GM10248 (cell line): ENCODE measurements at regions of chr9 and their contacts with region 1.

Region 1: DNA sequence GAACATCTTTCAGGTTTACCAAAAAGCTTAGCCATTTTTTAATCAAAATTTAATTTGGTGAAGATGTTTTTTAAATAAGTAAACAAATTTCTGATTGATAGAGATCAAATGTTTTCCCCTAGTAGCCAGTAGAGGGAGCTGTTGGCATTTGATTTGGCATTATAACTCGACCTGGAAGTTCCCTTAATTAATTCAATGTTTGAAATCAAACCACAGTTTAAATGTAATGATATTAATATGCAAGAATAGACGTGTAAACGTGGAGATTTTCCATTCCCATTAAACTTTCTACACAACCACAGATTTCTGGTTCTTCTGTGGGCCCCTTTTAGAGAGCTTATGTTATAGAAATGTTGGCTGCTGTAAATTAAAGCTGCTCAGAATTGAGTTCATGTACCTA is 148.1 kb upstream of the MPDZ start:
- DNase-seq: peak; percentile 36
- CTCF ChIP-seq: peak; percentile 53

Region 2: GRCh38 chr9:13267743-13268142 is 159.8 kb before region 1 on chr9:
- CTCF ChIA-PET with region 1: no interaction called
- POLR2A ChIA-PET with region 1: no interaction called
- DNase-seq: no peak
- CTCF ChIP-seq: no peak

Region 3: DNA sequence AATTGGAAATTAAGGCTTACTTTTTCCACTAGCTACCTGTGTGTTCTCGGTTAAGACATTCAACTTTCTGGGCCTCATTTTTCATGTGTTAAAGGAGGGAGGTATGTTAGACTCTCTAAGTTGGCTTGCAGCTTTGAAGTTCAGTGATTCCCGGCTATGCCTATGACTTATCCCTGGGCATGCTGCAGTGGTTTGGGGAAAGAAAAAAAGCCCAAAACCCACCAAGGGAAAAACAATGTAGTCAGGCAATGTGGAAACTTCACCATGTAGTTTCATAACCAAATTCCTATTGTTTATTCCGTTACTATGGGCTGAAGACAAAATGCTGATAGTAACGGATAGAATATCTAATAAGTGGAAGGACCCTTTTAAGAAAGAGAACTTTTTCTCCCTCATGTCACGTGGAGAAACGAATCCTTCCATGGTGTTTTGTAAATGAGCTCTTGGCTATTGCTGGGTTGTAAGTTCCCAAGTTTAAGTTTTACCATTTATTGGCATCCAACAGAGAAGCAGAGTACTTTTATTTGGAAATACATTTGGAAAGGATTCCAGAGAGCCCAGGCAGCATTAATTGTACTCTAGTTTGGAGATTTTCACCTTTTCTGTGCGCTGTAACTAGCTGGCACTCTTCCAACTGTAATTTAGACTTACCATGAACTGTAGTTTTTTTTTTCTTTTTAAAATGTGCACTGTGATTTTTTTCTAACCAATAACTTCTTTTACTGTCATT is 63.2 kb before region 1 on chr9:
- CTCF ChIA-PET with region 1: no interaction called
- POLR2A ChIA-PET with region 1: no interaction called
- DNase-seq: no peak
- CTCF ChIP-seq: no peak

Region 4: DNA sequence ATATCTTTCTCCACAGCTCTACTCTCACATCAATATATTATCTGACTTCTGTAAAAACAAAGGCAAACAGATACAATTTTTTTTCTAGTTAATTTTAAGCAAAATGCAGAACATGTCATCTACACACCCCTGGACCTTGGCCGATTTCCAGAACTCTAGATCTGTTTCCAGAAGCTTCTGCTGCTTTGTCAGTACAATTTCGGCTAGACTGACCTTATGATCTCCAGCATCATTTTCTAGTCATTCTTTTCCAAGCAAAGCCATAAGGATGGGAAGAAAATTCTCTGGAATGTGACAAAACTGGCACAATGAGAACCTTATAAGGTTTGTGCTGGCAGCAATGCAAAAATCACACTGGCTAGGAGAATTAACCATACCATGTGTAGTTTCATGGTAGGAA is 15.3 kb before region 1 on chr9:
- CTCF ChIA-PET with region 1: interaction called, 21 read pairs
- POLR2A ChIA-PET with region 1: no interaction called
- DNase-seq: no peak
- CTCF ChIP-seq: no peak

Region 5: GRCh38 chr9:13437866-13438265 is 10.3 kb after region 1 on chr9:
- CTCF ChIA-PET with region 1: interaction called, 45 read pairs
- POLR2A ChIA-PET with region 1: no interaction called
- DNase-seq: no peak
- CTCF ChIP-seq: no peak

Region 6: GRCh38 chr9:13443346-13444244 is 16.0 kb after region 1 on chr9:
- CTCF ChIA-PET with region 1: interaction called, 45 read pairs
- POLR2A ChIA-PET with region 1: no interaction called
- DNase-seq: no peak
- CTCF ChIP-seq: no peak

Region 7: GRCh38 chr9:14353222-14354056 is 925.9 kb after region 1 on chr9:
- CTCF ChIA-PET with region 1: interaction called, 127 read pairs
- POLR2A ChIA-PET with region 1: no interaction called
- DNase-seq: peak; percentile 78
- CTCF ChIP-seq: peak; percentile 92

Region 8: GRCh38 chr9:14428781-14429230 is 1001.2 kb after region 1 on chr9:
- CTCF ChIA-PET with region 1: interaction called, 27 read pairs
- POLR2A ChIA-PET with region 1: no interaction called
- DNase-seq: peak; percentile 34
- CTCF ChIP-seq: peak; percentile 69